ENCODE measurements at regions of chr6 and their contacts with region 1.

Region 1: GRCh38 chr6:106397431-106397830 is 36.9 kb downstream of the CRYBG1 start:
- DNase-seq: no peak
- ATAC-seq: no peak
- H3K4me3 ChIP-seq: no peak overlapping the region
- H3K4me3 Mint-ChIP-seq: no peak overlapping the region
- H3K27ac ChIP-seq: no peak overlapping the region
- H3K27ac Mint-ChIP-seq: no peak overlapping the region
- H3K4me1 ChIP-seq: no peaks in the 10 kb centered on the region
- H3K4me1 Mint-ChIP-seq: no peaks in the 10 kb centered on the region
- H3K27me3 ChIP-seq: no peaks in the 10 kb centered on the region
- H3K27me3 Mint-ChIP-seq: peaks cover 12 to 36% (median 25%) of the 10 kb centered on the region in 5 donors

Region 2: DNA sequence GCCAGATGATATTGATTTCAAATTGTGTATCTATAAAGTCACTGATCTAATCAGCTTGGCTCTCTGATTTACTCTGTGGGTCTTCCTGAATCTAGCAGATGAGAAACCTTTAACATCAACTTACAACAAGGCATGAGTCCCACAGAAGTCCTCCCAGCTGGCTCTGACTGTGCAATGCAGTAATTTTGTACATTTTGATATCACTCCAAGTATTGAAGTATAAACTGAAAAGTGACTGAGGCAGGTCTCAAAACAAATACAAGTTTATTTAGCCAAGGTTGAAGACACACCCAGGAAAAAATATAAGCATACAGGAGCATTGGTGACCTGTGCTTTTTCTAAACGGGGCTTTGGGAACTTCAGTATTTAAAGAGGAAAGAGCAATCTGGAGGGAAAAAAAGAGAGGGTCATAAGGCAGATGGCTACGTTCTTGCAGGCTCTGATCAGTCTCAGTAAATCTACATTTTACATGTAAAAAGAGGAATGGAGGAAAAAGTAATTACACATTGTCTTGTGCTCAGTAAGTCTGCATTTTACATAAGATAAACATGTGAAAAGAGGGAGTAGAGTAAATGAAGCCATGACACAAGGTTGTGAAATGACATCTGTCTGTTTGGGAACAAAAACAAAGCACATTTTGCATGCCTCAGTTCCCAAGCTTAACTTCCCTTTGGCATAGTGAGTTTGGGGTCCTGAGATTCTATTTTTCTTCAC is 22.6 kb after region 1 on chr6:
- CTCF ChIA-PET with region 1: no interaction called
- POLR2A ChIA-PET with region 1: no interaction called
- intact Hi-C with region 1: loop called in 1 of 2 experiments (anchors 1 kb)
- DNase-seq: no peak
- ATAC-seq: no peak
- H3K4me3 ChIP-seq: no peak overlapping the region
- H3K4me3 Mint-ChIP-seq: no peak overlapping the region
- H3K27ac ChIP-seq: no peak overlapping the region
- H3K27ac Mint-ChIP-seq: no peak overlapping the region
- H3K4me1 ChIP-seq: no peaks in the 10 kb centered on the region
- H3K4me1 Mint-ChIP-seq: no peaks in the 10 kb centered on the region
- H3K27me3 ChIP-seq: no peaks in the 10 kb centered on the region
- H3K27me3 Mint-ChIP-seq: peaks cover 6 to 31% (median 9%) of the 10 kb centered on the region in 5 donors